ENCODE measurements at regions of chr12 and their contacts with region 1.

Region 1: GRCh38 chr12:103495479-103496456 is at the start of gene C12orf42:
- DNase-seq: peak; percentile 58
- H3K4me3 Mint-ChIP-seq: peak within 1 kb of the TSS; percentile 70
- H3K27ac Mint-ChIP-seq: no peak within 1 kb of the TSS
- H3K4me1 Mint-ChIP-seq: peaks cover 6% of the 10 kb centered on the region
- H3K27me3 Mint-ChIP-seq: no peaks in the 10 kb centered on the region
- CTCF ChIP-seq: peak; percentile 55
- total RNA-seq, gene C12orf42: not detected in 2 replicates

Region 2: GRCh38 chr12:103523771-103524170 is 28.0 kb after region 1 on chr12:
- CTCF ChIA-PET with region 1: interaction called, 21 read pairs
- POLR2A ChIA-PET with region 1: interaction called, 3 read pairs
- intact Hi-C with region 1: no loop called
- DNase-seq: peak; percentile 13
- H3K4me3 Mint-ChIP-seq: no peak overlapping the region
- H3K27ac Mint-ChIP-seq: peak overlapping the region; percentile 44
- H3K4me1 Mint-ChIP-seq: peaks cover 8% of the 10 kb centered on the region
- H3K27me3 Mint-ChIP-seq: no peaks in the 10 kb centered on the region
- CTCF ChIP-seq: no peak

Region 3: GRCh38 chr12:103573185-103573584 is 77.4 kb after region 1 on chr12:
- CTCF ChIA-PET with region 1: no interaction called
- POLR2A ChIA-PET with region 1: no interaction called
- intact Hi-C with region 1: no loop called
- DNase-seq: peak; percentile 1
- H3K4me3 Mint-ChIP-seq: no peak overlapping the region
- H3K27ac Mint-ChIP-seq: no peak overlapping the region
- H3K4me1 Mint-ChIP-seq: peaks cover 9% of the 10 kb centered on the region
- H3K27me3 Mint-ChIP-seq: peaks cover 11% of the 10 kb centered on the region
- CTCF ChIP-seq: no peak

Measured in MCF 10A (cell line).